IMR-90 (cell line): ENCODE measurements at regions of chr1 and their contacts with region 1.

Region 1: GRCh38 chr1:163897412-163898155 is 575.8 kb downstream of the NUF2 start:
- DNase-seq: peak; percentile 11
- ATAC-seq: no peak
- H3K4me3 ChIP-seq: no peak overlapping the region
- H3K27ac ChIP-seq: no peak overlapping the region
- H3K4me1 ChIP-seq: no peaks in the 10 kb centered on the region
- H3K27me3 ChIP-seq: no peaks in the 10 kb centered on the region
- CTCF ChIP-seq: no peak
- POLR2A ChIP-seq: no peak
- RAD21 ChIP-seq: no peak

Region 2: GRCh38 chr1:162944974-162945674 is 952.5 kb before region 1 on chr1:
- CTCF ChIA-PET with region 1: no interaction called
- POLR2A ChIA-PET with region 1: no interaction called
- dilution Hi-C with region 1: no loop called
- in situ Hi-C with region 1: no loop called
- intact Hi-C with region 1: loop called (anchors 5 kb)
- DNase-seq: no peak
- ATAC-seq: no peak
- H3K4me3 ChIP-seq: no peak overlapping the region
- H3K27ac ChIP-seq: no peak overlapping the region
- H3K4me1 ChIP-seq: no peaks in the 10 kb centered on the region; the same call in 1 of the 2 replicates
- H3K27me3 ChIP-seq: no peaks in the 10 kb centered on the region
- CTCF ChIP-seq: no peak
- POLR2A ChIP-seq: no peak
- RAD21 ChIP-seq: no peak

Region 3: DNA sequence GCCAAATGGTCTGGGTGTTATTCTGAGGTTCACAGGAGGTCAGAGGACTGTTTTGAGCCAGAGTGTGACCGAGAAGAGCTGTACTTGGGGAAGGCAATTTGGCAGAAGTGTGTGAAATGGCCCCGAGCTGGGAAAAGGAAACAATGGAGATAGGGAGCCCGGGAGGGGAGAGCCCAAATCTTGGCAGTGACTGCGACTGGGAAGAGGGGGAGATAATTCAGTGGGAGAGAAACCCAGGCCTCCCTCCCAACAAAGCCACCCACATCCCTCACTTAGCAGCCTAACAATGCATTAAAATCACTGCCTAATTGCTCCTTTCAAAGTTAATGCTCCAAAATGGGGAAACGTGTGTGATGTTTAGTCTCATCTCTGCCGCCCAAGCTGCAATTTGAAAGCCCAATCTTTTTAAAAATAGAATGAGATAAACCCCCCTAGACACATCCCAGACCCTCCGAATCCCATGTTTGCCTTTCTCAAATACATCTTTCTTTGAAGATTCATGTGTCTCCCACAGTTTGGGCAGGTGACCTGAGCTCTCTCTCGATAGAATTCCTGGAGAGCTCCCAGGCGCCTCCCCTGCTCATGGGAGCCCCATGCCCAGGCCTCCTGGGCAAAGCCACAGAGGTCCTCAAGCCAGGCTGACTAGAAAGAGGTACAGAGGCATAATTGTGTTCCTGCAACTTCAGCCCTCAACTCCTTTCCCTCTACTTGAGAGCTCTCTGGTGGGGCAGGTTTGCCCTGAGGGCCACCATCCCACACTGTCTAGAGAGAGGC is 1663.5 kb after region 1 on chr1:
- CTCF ChIA-PET with region 1: no interaction called
- POLR2A ChIA-PET with region 1: no interaction called
- dilution Hi-C with region 1: no loop called
- in situ Hi-C with region 1: no loop called
- intact Hi-C with region 1: no loop called
- DNase-seq: no peak
- ATAC-seq: no peak
- H3K4me3 ChIP-seq: no peak overlapping the region
- H3K27ac ChIP-seq: no peak overlapping the region
- H3K4me1 ChIP-seq: no peaks in the 10 kb centered on the region
- H3K27me3 ChIP-seq: peaks cover 3% of the 10 kb centered on the region
- CTCF ChIP-seq: no peak
- POLR2A ChIP-seq: no peak
- RAD21 ChIP-seq: no peak